Common myeloid progenitor, CD34-positive (primary cell): ENCODE measurements at regions of chr2 and their contacts with region 1.

Region 1: GRCh38 chr2:46996300-46996843 is 80.8 kb upstream of the MCFD2 start:
- DNase-seq: no peak
- H3K4me3 ChIP-seq: no peak overlapping the region
- H3K27ac ChIP-seq: no peak overlapping the region
- H3K4me1 ChIP-seq: no peaks in the 10 kb centered on the region
- H3K27me3 ChIP-seq: no peaks in the 10 kb centered on the region

Region 2: GRCh38 chr2:47008381-47009252 is 12.2 kb after region 1 on chr2:
- CTCF ChIA-PET with region 1: interaction called, 11 read pairs
- POLR2A ChIA-PET with region 1: no interaction called
- DNase-seq: no peak
- H3K4me3 ChIP-seq: no peak overlapping the region
- H3K27ac ChIP-seq: no peak overlapping the region
- H3K4me1 ChIP-seq: no peaks in the 10 kb centered on the region
- H3K27me3 ChIP-seq: no peaks in the 10 kb centered on the region